ENCODE measurements at regions of chr3 and their contacts with region 1.

Region 1: GRCh38 chr3:37779289-37780152 is 82.2 kb upstream of the CTDSPL start:
- DNase-seq: peak; percentile 54 to 59
- H3K4me3 ChIP-seq: no peak overlapping the region
- H3K4me3 Mint-ChIP-seq: no peak overlapping the region
- H3K27ac Mint-ChIP-seq: no peak overlapping the region
- H3K4me1 ChIP-seq: no peaks in the 10 kb centered on the region
- H3K4me1 Mint-ChIP-seq: no peaks in the 10 kb centered on the region
- H3K27me3 ChIP-seq: no peaks in the 10 kb centered on the region
- H3K27me3 Mint-ChIP-seq: no peaks in the 10 kb centered on the region
- CTCF ChIP-seq: peak; percentile 71 to 80

Region 2: DNA sequence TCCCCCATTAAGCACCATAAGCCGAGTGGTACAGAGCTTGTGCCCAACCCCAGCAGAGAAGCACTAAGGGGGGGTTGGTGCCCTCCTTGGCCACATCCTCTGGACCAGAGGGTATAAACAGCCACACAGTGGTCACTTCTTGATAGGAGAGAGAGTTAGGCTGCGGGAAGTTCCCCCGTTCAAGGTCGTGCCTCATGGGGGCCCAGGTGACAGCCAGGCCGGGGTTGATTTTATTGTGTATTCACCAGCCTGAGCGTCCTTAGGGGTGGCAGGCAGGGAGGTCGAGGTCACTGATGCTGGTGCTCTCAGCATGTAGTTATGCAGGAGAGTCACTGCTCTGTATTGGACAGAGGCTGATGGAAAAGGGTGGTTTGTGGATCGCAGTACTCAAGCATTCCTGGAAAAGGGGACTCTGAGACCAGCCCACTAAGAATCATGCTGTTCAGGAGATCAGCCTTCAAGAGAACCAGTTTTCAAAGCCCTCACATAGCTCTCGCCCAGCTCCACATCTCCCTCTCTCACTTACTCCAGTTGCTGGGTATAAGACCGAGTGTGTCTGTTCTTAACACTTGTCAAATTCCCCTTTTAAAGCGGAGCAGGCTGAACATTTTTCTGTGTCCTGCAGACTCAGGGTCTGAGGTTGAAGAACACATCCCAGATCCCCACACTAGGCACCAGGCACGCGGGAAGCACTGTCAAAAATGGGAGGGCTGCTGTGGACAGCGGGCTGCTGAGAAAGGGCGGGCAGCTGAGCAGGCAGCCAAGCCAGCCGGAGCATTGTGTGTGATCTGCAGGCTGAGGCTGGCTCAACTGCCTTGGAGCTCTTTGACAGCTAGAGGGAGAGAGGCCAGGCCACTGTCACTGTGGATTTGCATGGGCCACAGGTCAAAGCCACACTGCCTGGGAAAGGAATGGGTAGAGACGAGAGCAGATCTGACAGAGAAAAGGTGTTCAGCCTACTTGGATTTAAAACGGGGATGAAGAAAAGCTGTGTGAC is 325.8 kb before region 1 on chr3:
- CTCF ChIA-PET with region 1: interaction called, 5 read pairs
- POLR2A ChIA-PET with region 1: no interaction called
- intact Hi-C with region 1: loop called (anchors 1 kb)
- DNase-seq: peak; percentile 59 to 67
- H3K4me3 ChIP-seq: peak overlapping the region; percentile 52
- H3K4me3 Mint-ChIP-seq: peak overlapping the region; percentile 72
- H3K27ac Mint-ChIP-seq: no peak overlapping the region
- H3K4me1 ChIP-seq: 0 out of 2 replicates have a peak, but pooled peaks cover 12% of the 10 kb centered on the region
- H3K4me1 Mint-ChIP-seq: peaks cover 12% of the 10 kb centered on the region
- H3K27me3 ChIP-seq: no peaks in the 10 kb centered on the region
- H3K27me3 Mint-ChIP-seq: peaks cover 5% of the 10 kb centered on the region
- CTCF ChIP-seq: peak in 1 of 2 experiments; percentile 69

Region 3: DNA sequence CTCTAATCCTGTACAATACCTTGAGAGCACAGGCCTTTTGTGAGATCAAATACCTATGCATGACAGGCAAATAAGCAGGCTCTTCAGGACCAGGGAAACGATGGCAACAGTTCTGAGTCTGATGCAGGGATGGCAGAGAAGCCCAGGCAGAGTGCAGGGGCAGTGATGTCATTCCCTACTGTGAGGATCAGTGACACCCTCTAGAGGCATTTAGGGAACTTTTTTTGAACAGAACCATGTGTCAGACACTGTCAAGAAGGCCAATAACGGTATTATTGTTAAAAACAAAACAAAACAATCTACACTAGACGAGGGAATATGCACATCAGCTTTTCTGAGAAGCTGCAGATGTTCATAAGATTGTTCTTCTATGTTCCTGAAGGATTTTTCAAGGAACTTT is 232.6 kb before region 1 on chr3:
- CTCF ChIA-PET with region 1: interaction called, 5 read pairs
- POLR2A ChIA-PET with region 1: no interaction called
- intact Hi-C with region 1: loop called (anchors 2 kb)
- DNase-seq: peak in 1 of 2 experiments; percentile 27
- H3K4me3 ChIP-seq: no peak overlapping the region
- H3K4me3 Mint-ChIP-seq: no peak overlapping the region
- H3K27ac Mint-ChIP-seq: no peak overlapping the region
- H3K4me1 ChIP-seq: no peaks in the 10 kb centered on the region
- H3K4me1 Mint-ChIP-seq: peaks cover 11% of the 10 kb centered on the region
- H3K27me3 ChIP-seq: no peaks in the 10 kb centered on the region
- H3K27me3 Mint-ChIP-seq: no peaks in the 10 kb centered on the region
- CTCF ChIP-seq: peak in 1 of 2 experiments; percentile 15

Region 4: DNA sequence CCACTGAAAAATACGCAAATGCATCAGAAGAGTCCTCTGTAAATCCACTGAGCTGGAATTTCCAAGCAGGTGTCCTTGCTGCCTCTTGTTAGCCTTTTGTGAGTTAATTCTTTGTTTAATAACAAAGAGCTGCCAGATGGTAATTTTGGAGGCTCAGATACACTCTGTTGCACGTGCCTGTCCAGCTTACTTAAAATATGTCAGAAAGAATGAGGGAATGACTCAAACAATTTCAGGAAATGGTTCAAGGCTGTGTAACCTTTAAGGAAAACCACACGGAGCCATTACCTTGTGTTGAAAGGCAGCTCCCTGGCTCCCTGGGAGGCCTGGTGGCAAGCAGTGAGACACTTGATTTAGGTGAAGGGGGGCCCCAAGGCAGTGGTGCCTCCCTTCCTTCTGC is 220.1 kb before region 1 on chr3:
- CTCF ChIA-PET with region 1: no interaction called
- POLR2A ChIA-PET with region 1: no interaction called
- intact Hi-C with region 1: loop called (anchors 2 kb)
- DNase-seq: no peak
- H3K4me3 ChIP-seq: no peak overlapping the region
- H3K4me3 Mint-ChIP-seq: no peak overlapping the region
- H3K27ac Mint-ChIP-seq: no peak overlapping the region
- H3K4me1 ChIP-seq: no peaks in the 10 kb centered on the region
- H3K4me1 Mint-ChIP-seq: no peaks in the 10 kb centered on the region
- H3K27me3 ChIP-seq: no peaks in the 10 kb centered on the region
- H3K27me3 Mint-ChIP-seq: no peaks in the 10 kb centered on the region
- CTCF ChIP-seq: no peak

Region 5: DNA sequence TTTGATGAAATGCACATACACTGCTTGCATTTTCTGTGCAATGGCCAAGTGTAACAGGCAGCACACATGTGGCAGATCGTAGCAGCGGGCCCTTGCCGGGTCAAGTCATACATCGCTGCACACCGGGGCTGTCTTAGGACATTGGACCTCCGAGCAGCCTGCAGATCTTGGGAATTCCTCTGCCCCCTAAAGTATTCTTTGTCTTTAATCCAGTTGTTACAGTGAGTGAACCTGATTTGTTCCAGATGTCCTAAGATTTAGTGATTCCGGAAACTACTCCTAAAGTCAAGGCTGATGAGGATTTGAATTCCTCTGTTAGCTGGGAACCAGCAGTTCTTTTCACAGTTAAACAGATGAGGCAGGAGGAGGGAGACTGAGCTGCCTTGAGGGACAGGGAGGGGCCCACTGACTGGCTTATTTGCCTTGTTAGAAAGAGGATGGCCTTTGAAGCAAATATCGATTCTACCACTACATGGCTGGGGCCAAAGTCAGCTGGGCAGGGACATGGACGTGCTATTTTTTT is 108.5 kb before region 1 on chr3:
- CTCF ChIA-PET with region 1: no interaction called
- POLR2A ChIA-PET with region 1: no interaction called
- intact Hi-C with region 1: no loop called
- DNase-seq: no peak
- H3K4me3 ChIP-seq: no peak overlapping the region
- H3K4me3 Mint-ChIP-seq: no peak overlapping the region
- H3K27ac Mint-ChIP-seq: no peak overlapping the region
- H3K4me1 ChIP-seq: peaks cover 34% of the 10 kb centered on the region
- H3K4me1 Mint-ChIP-seq: peaks cover 39% of the 10 kb centered on the region
- H3K27me3 ChIP-seq: no peaks in the 10 kb centered on the region
- H3K27me3 Mint-ChIP-seq: no peaks in the 10 kb centered on the region
- CTCF ChIP-seq: no peak

Measured in Caco-2 (cell line).